A673 (cell line): ENCODE measurements at regions of chr3 and their contacts with region 1.

Region 1: DNA sequence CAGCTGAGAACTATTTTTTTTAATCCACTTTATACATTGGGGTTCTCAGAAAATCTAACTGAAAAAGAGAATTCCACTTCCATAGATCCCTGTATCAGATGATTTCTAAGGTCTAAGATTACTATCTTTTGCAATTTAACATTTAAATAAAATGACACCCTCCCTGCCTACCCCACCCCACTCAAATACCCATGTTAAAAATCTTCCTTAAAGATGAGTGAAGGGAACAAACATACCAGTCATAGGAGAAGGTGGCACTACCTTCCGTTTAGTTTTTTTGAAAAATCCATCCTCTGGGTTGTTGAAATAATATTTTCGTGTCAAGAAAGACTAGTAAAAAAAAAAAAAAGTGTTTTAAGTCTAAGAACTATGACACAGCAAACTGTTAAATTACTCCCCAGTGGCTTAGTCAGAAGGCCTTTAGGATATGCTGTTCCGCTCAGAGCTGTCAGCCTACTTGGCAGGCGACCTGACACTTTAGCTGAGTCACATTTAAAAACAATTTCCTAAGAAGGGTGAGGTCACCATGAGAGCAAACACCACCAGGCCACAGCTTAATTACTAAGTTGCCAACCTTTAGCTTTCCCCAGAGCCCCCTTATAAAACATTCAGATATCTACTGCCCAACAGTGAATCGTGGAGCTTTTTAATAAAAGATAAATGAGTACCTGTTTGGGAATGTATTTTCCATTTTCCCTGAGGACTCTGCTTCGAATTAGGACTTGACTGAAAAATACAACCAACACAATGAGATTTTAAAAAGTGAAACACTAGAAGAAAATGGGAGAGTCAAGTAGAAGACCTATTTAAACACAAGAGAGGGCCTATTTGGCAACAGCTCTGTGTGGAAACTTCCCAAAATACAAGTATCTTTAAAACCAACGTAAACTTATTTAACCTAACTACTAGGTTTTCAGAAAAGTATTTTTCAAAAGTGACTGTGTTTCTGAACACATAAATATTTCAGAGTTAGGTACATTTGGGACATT is 9.6 kb downstream of the EMC3 start:
- DNase-seq: peak; percentile 88
- H3K4me3 ChIP-seq: no peak overlapping the region
- H3K27ac ChIP-seq: peak overlapping the region; percentile 71
- H3K4me1 ChIP-seq: peaks cover 13% of the 10 kb centered on the region
- H3K27me3 ChIP-seq: no peaks in the 10 kb centered on the region
- CTCF ChIP-seq: no peak

Region 2: DNA sequence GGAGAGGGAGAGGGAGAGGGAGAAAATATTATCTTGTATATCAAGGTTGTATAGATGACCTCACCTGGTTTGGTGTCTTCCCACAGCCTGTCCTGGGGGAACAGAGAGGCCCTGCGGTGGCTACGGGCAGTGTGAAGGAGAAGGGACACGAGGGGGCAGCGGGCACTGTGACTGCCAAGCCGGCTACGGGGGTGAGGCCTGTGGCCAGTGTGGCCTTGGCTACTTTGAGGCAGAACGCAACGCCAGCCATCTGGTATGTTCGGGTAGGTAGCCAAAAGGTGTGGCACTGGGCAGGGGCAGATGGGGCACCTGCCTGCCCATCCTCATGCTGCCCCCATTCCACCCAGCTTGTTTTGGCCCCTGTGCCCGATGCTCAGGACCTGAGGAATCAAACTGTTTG is 36.3 kb before region 1 on chr3:
- CTCF ChIA-PET with region 1: no interaction called
- POLR2A ChIA-PET with region 1: no interaction called
- intact Hi-C with region 1: no loop called
- DNase-seq: no peak
- H3K4me3 ChIP-seq: no peak overlapping the region
- H3K27ac ChIP-seq: no peak overlapping the region
- H3K4me1 ChIP-seq: no peaks in the 10 kb centered on the region
- H3K27me3 ChIP-seq: no peaks in the 10 kb centered on the region
- CTCF ChIP-seq: no peak

Region 3: DNA sequence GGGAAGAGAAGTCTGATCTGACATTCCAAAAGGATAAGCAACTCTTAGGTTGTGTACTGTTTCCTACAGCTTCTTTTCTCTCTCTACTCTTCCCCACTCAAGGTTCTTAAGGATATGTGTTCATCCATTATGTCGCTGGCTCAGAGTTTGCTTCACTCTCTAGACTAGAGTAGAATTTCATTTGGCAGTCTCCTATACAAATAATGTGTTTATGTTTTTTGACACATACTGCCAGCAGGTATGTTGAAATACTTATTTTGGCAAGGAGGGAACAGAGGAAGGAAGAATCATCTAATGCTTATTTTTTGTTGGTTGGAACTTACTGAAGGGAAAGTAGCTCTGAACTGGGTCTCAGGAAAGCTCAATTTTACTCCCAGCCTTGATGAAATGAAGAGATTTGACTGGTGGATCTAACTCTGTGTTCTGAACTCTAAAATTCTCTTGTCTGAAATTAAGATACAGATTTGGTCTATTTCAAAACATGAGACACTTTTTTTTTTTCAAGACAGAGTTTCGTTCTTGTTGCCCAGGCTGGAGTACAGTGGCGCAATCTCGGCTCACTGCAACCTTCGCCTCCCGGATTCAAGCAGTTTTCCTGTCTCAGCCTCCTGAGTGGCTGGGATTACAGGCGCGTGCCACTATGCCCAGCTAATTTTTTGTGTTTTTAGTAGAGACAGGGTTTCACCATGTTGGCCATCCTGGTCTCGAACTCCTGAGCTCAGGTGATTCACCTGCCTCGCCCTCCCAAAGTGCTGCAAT is 17.2 kb after region 1 on chr3:
- CTCF ChIA-PET with region 1: no interaction called
- POLR2A ChIA-PET with region 1: interaction called, 11 read pairs
- intact Hi-C with region 1: no loop called
- DNase-seq: no peak
- H3K4me3 ChIP-seq: no peak overlapping the region
- H3K27ac ChIP-seq: no peak overlapping the region
- H3K4me1 ChIP-seq: no peaks in the 10 kb centered on the region
- H3K27me3 ChIP-seq: no peaks in the 10 kb centered on the region
- CTCF ChIP-seq: no peak